Colonic mucosa (tissue), 4 donors: ENCODE measurements at regions of chr2 and their contacts with region 1.

Region 1: DNA sequence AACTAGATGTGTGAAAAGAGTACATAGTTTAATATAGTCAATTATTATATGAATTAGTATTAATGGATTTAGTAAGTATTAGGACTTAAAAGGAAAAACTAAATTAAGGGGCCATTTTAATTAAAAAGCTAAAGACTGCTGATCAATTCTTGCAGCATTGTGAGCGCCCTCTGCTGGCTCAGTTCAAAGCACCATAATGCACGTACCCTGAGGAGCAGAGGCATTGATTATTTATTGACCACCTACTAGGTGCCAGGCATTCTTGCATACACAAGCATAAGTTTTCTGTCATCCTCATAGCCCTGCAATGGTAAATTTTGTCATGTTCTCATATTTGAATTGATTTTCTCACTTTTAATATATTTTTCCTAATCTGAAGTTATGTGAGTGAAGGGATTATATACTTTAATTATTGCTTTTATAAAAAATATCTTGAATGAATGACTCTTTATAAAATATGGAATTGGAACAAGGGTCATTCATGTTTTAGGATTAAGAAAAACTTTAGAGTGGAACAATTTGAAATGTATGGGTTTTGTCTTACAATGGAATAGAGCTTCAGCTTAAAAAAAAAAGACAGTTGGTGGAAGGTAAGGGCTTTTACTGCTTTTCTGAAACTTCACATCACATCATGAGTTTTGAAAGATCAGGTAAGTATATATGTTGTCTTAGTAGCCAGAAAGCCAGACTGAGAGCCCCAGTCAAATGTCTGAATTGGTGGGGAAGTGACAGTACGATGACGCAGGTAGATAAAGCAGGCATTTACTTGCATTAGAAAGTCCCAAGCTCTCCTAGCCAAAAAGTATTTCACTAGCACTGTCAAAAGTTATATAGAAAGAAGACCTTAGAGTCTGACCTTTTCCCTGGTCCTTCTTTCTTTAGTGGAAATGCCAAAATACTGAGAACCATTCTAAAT is 9.7 kb downstream of the ITGA4 start:
- DNase-seq: peak; percentile 76
- H3K4me3 ChIP-seq: no peak overlapping the region
- H3K27ac ChIP-seq: no peak overlapping the region
- H3K4me1 ChIP-seq: no peaks in the 10 kb centered on the region
- H3K27me3 ChIP-seq: no peaks in the 10 kb centered on the region
- CTCF ChIP-seq: peak; percentile 89

Region 2: GRCh38 chr2:180125245-180125962 is 1341.5 kb before region 1 on chr2:
- intact Hi-C with region 1: loop called (anchors 5 kb)
- DNase-seq: peak; percentile 31
- H3K4me3 ChIP-seq: no peak overlapping the region
- H3K27ac ChIP-seq: no peak overlapping the region
- H3K4me1 ChIP-seq: no peaks in the 10 kb centered on the region
- H3K27me3 ChIP-seq: no peaks in the 10 kb centered on the region
- CTCF ChIP-seq: peak; percentile 50

Region 3: GRCh38 chr2:181104512-181105115 is 362.3 kb before region 1 on chr2:
- intact Hi-C with region 1: loop called (anchors 10 kb)
- DNase-seq: peak; percentile 24
- H3K4me3 ChIP-seq: no peak overlapping the region
- H3K27ac ChIP-seq: no peak overlapping the region
- H3K4me1 ChIP-seq: no peaks in the 10 kb centered on the region
- H3K27me3 ChIP-seq: no peaks in the 10 kb centered on the region
- CTCF ChIP-seq: peak; percentile 42

Region 4: DNA sequence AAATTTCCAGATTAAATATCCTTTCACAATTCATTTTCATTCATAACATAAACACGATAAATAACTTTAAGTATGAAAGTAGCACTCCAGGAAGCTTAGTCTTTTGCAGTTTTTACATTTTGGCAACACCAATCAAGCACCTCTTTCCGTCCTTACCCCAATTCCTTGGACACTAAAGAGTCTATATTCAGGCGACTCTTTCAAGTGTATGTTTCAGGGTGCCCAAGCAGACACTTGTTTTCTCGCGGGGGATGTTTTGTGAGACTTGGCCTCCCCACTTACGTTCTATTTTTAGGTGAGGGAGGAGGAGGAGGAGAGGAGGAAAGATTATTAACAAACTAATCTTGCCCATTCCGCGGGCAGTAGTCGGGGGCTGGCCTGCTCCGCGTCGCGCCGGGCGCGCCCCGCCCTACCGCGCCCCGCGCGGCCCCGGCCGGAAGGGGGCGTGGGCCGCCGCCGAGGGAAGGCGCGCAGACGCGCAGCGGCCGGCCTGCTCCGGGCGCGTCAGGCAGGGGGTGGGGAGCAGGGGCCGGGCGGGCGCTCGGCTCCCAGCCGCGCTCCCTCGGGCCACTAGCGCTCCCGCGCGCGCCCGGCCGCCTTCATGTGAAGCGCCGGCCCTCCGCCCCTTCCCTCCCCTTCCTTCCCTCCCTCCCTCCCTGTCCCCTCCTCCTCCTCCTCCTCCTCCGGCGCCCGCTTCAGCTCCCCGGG is 424.5 kb after region 1 on chr2 and contains the start of gene ITPRID2:
- intact Hi-C with region 1: no loop called
- DNase-seq: peak; percentile 87
- H3K4me3 ChIP-seq: peak within 1 kb of the TSS; percentile 69
- H3K27ac ChIP-seq: peak within 1 kb of the TSS; percentile 98
- H3K4me1 ChIP-seq: no peaks in the 10 kb centered on the region
- H3K27me3 ChIP-seq: no peaks in the 10 kb centered on the region
- CTCF ChIP-seq: no peak
- total RNA-seq, gene ITPRID2: 141 to 323 TPM